ENCODE measurements at regions of chr11 and their contacts with region 1.

Region 1: GRCh38 chr11:30322826-30323710 is at the start of gene ARL14EP:
- DNase-seq: peak; percentile 64
- ATAC-seq: peak; percentile 100
- H3K4me3 ChIP-seq: peak within 1 kb of the TSS; percentile 68 to 97
- H3K27ac ChIP-seq: peak within 1 kb of the TSS; percentile 87
- H3K4me1 ChIP-seq: peaks cover 9% of the 10 kb centered on the region; the same call in 1 of the 2 replicates
- H3K27me3 ChIP-seq: no peaks in the 10 kb centered on the region
- CTCF ChIP-seq: no peak
- total RNA-seq, gene ARL14EP: 22.1 TPM

Region 2: DNA sequence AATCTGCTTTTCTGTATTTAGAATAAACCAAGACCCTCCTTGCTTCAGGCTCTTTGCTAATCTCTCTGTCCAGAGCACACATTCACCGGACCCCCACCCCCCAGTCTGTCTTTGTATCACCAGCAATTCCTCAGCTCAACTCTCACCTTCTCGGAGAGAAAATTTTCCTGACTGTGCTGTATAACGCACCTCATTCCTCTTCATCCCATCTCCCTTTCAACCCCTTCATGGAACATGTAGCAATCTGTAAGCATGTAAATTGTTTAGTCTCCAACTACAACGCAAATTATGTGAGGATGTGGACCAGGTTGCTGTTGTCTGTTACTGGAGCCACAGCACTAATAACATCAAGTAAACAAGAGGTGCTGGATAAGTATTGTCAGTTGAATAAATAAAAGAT is 696.7 kb after region 1 on chr11:
- CTCF ChIA-PET with region 1: no interaction called
- POLR2A ChIA-PET with region 1: interaction called, 10 read pairs
- in situ Hi-C with region 1: no loop called
- intact Hi-C with region 1: no loop called
- DNase-seq: no peak
- ATAC-seq: no peak
- H3K4me3 ChIP-seq: no peak overlapping the region
- H3K27ac ChIP-seq: no peak overlapping the region
- H3K4me1 ChIP-seq: no peaks in the 10 kb centered on the region
- H3K27me3 ChIP-seq: no peaks in the 10 kb centered on the region
- CTCF ChIP-seq: no peak

Measured in Panc1 (cell line).